KBM-7 (cell line): ENCODE measurements at regions of chr5 and their contacts with region 1.

Region 1: GRCh38 chr5:146533260-146533857 is 17.4 kb upstream of the GPR151 start:
- DNase-seq: peak; percentile 69

Region 2: GRCh38 chr5:147188200-147189108 is 655.1 kb after region 1 on chr5:
- in situ Hi-C with region 1: loop called (anchors 25 kb)
- DNase-seq: peak; percentile 62